B cell (primary cell): ENCODE measurements at regions of chr2 and their contacts with region 1.

Region 1: DNA sequence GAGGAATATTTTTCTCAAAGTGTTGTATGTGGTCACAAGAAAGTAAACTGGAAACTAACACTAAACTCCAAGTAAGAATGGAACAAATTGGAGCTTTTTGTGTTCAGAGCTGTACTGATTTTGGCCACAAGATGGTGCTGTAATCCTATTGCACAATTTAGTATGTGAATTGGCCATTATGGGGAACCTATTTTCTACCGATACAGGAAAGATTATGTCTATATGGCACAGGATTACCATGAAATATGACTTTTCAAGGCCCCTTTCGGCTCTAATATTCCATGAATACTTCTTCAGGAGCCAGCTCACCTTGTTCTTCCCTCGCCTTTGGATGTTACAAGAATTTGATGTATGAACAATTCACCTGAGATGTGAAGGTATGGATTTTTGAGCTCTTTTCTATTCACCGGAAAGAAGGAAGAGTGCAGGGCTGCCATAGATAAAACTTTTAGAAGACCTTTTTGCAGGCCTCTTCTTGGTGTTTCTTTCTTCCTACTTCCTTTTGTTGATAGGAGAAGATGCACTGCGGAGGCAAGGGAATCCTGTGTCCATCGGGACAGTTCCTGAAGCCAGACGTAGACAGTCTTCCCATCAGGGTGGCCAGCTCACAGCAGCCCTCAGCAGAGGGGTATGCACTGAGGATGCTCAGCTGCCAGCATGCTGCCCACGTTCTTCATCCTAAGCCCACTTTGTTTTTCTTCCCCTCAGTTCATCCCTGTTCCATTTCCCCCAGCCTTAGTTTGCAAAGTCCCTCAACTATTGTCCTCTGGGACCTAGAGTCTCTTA is 13.3 kb downstream of the MRPL44 start:
- DNase-seq: peak; percentile 76
- ATAC-seq: no peak
- H3K4me3 ChIP-seq: no peak overlapping the region
- H3K4me3 Mint-ChIP-seq: no peak overlapping the region
- H3K27ac ChIP-seq: no peak overlapping the region
- H3K27ac Mint-ChIP-seq: no peak overlapping the region
- H3K4me1 ChIP-seq: peaks cover 0 to 3% of the 10 kb centered on the region in 2 donors
- H3K4me1 Mint-ChIP-seq: peaks cover 5% of the 10 kb centered on the region
- H3K27me3 ChIP-seq: no peaks in the 10 kb centered on the region
- H3K27me3 Mint-ChIP-seq: no peaks in the 10 kb centered on the region
- CTCF ChIP-seq: peak; percentile 94

Region 2: DNA sequence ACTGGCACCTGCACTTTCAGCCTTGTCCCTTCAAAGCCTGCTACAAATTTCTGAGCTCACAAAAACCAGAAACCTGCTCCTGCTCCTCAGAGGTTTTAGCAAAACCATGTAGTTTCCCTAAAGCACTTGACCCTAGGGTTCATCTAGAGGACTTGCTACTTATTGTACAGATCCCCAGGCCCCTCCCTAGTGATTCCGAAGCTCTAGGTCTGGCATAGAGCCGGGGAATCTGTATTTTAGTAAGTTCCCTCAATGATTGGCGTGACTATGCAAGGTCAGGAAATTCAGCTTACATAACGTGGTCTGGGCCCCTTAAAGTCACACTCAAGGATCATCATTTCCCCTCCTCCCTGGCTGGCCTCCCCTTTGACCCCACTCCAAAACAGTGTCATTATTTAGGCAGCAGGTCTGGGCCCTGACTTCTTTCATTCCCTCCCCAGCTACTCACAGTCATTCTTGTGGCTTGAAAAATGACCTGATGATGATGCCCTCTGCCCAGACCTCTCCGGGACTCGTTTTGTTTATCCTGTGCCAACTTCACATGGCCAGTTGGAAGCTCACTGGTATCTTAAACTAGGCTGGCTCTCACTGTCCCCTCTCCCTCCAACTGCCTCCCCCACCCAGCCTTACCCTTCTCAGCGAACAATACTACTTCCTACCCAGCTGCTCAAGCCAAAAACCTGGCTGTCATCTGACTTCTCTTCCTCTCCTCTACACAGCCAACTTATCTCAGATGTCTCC is 61.4 kb before region 1 on chr2:
- CTCF ChIA-PET with region 1: interaction called, 11 read pairs
- POLR2A ChIA-PET with region 1: no interaction called
- intact Hi-C with region 1: no loop called
- DNase-seq: no peak
- ATAC-seq: no peak
- H3K4me3 ChIP-seq: no peak overlapping the region
- H3K4me3 Mint-ChIP-seq: no peak overlapping the region
- H3K27ac ChIP-seq: no peak overlapping the region
- H3K27ac Mint-ChIP-seq: peak overlapping the region; percentile 56
- H3K4me1 ChIP-seq: no peaks in the 10 kb centered on the region
- H3K4me1 Mint-ChIP-seq: peaks cover 26% of the 10 kb centered on the region
- H3K27me3 ChIP-seq: no peaks in the 10 kb centered on the region
- H3K27me3 Mint-ChIP-seq: no peaks in the 10 kb centered on the region
- CTCF ChIP-seq: no peak

Region 3: DNA sequence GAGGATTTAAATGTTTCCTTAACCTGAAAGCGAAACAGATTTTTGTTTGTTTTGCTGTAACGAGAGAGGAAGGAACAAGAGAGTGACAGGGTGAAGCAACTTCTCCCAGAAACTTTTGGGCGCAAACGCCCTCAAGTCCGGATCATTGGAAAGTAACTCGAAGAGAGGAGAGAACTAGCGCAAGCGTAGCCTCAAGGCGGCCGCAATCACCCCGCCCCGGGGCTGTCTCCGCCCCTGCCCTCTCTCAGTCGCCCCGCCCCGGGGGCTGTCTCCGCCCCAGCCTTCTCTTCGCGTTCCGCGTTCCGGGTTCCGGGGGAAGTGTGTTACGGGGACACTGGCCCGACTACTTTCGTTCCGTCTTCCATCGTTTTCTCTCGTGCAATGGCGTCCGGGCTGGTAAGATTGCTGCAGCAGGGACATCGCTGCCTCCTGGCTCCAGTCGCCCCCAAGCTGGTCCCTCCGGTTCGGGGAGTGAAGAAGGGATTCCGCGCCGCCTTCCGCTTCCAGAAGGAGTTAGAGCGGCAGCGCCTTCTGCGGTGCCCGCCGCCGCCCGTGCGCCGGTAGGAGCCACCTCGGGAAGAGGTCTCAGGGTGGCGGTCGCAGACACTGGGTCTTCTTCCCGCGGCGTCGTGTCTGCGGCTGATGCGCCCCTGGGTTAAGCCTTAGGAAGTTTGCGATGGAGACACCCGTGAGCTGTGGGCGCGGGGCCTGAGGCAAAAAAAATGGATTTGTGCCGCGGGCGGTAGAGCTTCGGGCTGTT is 13.3 kb before region 1 on chr2 and contains the start of gene MRPL44:
- CTCF ChIA-PET with region 1: interaction called, 47 read pairs
- POLR2A ChIA-PET with region 1: no interaction called
- intact Hi-C with region 1: no loop called
- DNase-seq: peak; percentile 96
- ATAC-seq: peak; percentile 99
- H3K4me3 ChIP-seq: peak within 1 kb of the TSS; percentile 66 to 94 (median 86)
- H3K4me3 Mint-ChIP-seq: peak within 1 kb of the TSS; percentile 94
- H3K27ac ChIP-seq: peak within 1 kb of the TSS; percentile 72 to 78
- H3K27ac Mint-ChIP-seq: peak within 1 kb of the TSS; percentile 97
- H3K4me1 ChIP-seq: peaks cover 48 to 52% of the 10 kb centered on the region in 2 donors
- H3K4me1 Mint-ChIP-seq: peaks cover 67% of the 10 kb centered on the region
- H3K27me3 ChIP-seq: no peaks in the 10 kb centered on the region
- H3K27me3 Mint-ChIP-seq: no peaks in the 10 kb centered on the region
- CTCF ChIP-seq: no peak
- total RNA-seq, gene MRPL44: 23.4 and 26.7 TPM in 2 replicates

Region 4: DNA sequence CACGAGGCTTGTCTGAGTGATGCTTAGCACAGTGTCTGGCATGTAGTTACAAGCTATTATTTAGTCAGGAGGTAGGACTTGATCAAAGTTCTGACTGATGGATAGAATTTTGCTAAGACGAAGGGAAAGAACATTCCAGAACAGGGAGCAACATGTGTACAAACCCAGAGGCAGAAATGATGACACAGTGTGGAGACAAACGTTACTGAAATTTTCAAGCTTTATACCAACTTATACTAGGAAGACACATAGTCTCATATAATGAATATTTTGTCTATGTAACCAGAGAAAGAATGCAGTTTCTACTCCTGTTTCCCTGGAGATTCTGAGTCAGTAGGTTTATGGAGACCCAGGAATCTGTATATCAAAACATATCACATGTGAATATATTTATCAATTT is 308.0 kb after region 1 on chr2:
- CTCF ChIA-PET with region 1: interaction called, 211 read pairs
- POLR2A ChIA-PET with region 1: no interaction called
- intact Hi-C with region 1: no loop called
- DNase-seq: no peak
- ATAC-seq: no peak
- H3K4me3 ChIP-seq: no peak overlapping the region
- H3K4me3 Mint-ChIP-seq: no peak overlapping the region
- H3K27ac ChIP-seq: no peak overlapping the region
- H3K27ac Mint-ChIP-seq: no peak overlapping the region
- H3K4me1 ChIP-seq: no peaks in the 10 kb centered on the region
- H3K4me1 Mint-ChIP-seq: no peaks in the 10 kb centered on the region
- H3K27me3 ChIP-seq: peaks cover 0 to 6% (median 0%) of the 10 kb centered on the region in 4 experiments
- H3K27me3 Mint-ChIP-seq: peaks cover 27% of the 10 kb centered on the region
- CTCF ChIP-seq: no peak

Region 5: GRCh38 chr2:224357098-224357901 is 386.8 kb after region 1 on chr2:
- CTCF ChIA-PET with region 1: interaction called, 3 read pairs
- POLR2A ChIA-PET with region 1: no interaction called
- intact Hi-C with region 1: loop called (anchors 10 kb)
- DNase-seq: peak; percentile 79
- ATAC-seq: peak; percentile 81
- H3K4me3 ChIP-seq: no peak overlapping the region
- H3K4me3 Mint-ChIP-seq: no peak overlapping the region
- H3K27ac ChIP-seq: no peak overlapping the region
- H3K27ac Mint-ChIP-seq: no peak overlapping the region
- H3K4me1 ChIP-seq: no peaks in the 10 kb centered on the region
- H3K4me1 Mint-ChIP-seq: no peaks in the 10 kb centered on the region
- H3K27me3 ChIP-seq: no peaks in the 10 kb centered on the region
- H3K27me3 Mint-ChIP-seq: peaks cover 11% of the 10 kb centered on the region
- CTCF ChIP-seq: peak; percentile 87

Region 6: GRCh38 chr2:224449212-224450147 is 478.9 kb after region 1 on chr2:
- CTCF ChIA-PET with region 1: no interaction called
- POLR2A ChIA-PET with region 1: no interaction called
- intact Hi-C with region 1: loop called (anchors 2 kb)
- DNase-seq: peak; percentile 54
- ATAC-seq: peak; percentile 47
- H3K4me3 ChIP-seq: no peak overlapping the region
- H3K4me3 Mint-ChIP-seq: no peak overlapping the region
- H3K27ac ChIP-seq: no peak overlapping the region
- H3K27ac Mint-ChIP-seq: no peak overlapping the region
- H3K4me1 ChIP-seq: no peaks in the 10 kb centered on the region
- H3K4me1 Mint-ChIP-seq: no peaks in the 10 kb centered on the region
- H3K27me3 ChIP-seq: peaks cover 0 to 3% (median 0%) of the 10 kb centered on the region in 4 experiments
- H3K27me3 Mint-ChIP-seq: no peaks in the 10 kb centered on the region
- CTCF ChIP-seq: peak; percentile 76

Region 7: DNA sequence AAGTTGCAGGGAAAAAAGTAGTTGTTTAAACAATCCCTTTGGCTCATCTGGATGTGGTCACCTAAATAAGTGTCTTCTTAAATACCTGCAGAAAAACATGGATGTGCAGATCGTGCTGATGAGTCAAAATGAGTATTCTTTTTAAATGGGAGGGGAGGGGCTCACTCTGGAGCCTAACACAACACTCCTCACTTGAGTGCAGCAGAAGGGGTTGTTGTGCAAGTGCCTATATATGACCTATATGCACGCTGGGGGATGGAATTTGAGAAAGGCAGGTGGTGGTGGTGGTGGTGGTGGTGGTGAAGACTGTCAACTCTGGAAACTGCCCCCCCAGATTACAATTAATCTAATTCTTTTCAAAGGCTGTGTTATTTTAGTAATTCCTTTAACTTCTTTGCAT is 509.3 kb after region 1 on chr2:
- CTCF ChIA-PET with region 1: no interaction called
- POLR2A ChIA-PET with region 1: no interaction called
- intact Hi-C with region 1: no loop called
- DNase-seq: no peak
- ATAC-seq: no peak
- H3K4me3 ChIP-seq: no peak overlapping the region
- H3K4me3 Mint-ChIP-seq: no peak overlapping the region
- H3K27ac ChIP-seq: no peak overlapping the region
- H3K27ac Mint-ChIP-seq: peak overlapping the region; percentile 59
- H3K4me1 ChIP-seq: no peaks in the 10 kb centered on the region
- H3K4me1 Mint-ChIP-seq: peaks cover 7% of the 10 kb centered on the region
- H3K27me3 ChIP-seq: no peaks in the 10 kb centered on the region
- H3K27me3 Mint-ChIP-seq: no peaks in the 10 kb centered on the region
- CTCF ChIP-seq: no peak